ENCODE measurements at regions of chr11 and their contacts with region 1.

Region 1: GRCh38 chr11:60700689-60701480 is 1.5 kb downstream of the MS4A8 start:
- DNase-seq: peak; percentile 21 to 51 (median 33)
- ATAC-seq: peak; percentile 80
- H3K4me3 ChIP-seq: no peak overlapping the region
- H3K27ac ChIP-seq: no peak overlapping the region
- H3K4me1 ChIP-seq: no peaks in the 10 kb centered on the region
- H3K27me3 ChIP-seq: peaks cover 0 to 14% of the 10 kb centered on the region in 2 experiments; a peak in 3 of 5 replicates
- CTCF ChIP-seq: peak; percentile 52 to 61 (median 56)
- EP300 ChIP-seq: no peak
- POLR2A ChIP-seq: no peak
- RAD21 ChIP-seq: peak in 1 of 2 experiments; percentile 39; a peak in 1 of 4 replicates

Region 2: GRCh38 chr11:60672255-60672654 is 28.6 kb before region 1 on chr11:
- CTCF ChIA-PET with region 1: no interaction called
- POLR2A ChIA-PET with region 1: no interaction called
- in situ Hi-C with region 1: no loop called
- intact Hi-C with region 1: no loop called
- DNase-seq: no peak
- ATAC-seq: no peak
- H3K4me3 ChIP-seq: no peak overlapping the region
- H3K27ac ChIP-seq: no peak overlapping the region
- H3K4me1 ChIP-seq: no peaks in the 10 kb centered on the region
- H3K27me3 ChIP-seq: no peaks in the 10 kb centered on the region
- CTCF ChIP-seq: no peak
- EP300 ChIP-seq: no peak
- POLR2A ChIP-seq: no peak
- RAD21 ChIP-seq: no peak

Region 3: DNA sequence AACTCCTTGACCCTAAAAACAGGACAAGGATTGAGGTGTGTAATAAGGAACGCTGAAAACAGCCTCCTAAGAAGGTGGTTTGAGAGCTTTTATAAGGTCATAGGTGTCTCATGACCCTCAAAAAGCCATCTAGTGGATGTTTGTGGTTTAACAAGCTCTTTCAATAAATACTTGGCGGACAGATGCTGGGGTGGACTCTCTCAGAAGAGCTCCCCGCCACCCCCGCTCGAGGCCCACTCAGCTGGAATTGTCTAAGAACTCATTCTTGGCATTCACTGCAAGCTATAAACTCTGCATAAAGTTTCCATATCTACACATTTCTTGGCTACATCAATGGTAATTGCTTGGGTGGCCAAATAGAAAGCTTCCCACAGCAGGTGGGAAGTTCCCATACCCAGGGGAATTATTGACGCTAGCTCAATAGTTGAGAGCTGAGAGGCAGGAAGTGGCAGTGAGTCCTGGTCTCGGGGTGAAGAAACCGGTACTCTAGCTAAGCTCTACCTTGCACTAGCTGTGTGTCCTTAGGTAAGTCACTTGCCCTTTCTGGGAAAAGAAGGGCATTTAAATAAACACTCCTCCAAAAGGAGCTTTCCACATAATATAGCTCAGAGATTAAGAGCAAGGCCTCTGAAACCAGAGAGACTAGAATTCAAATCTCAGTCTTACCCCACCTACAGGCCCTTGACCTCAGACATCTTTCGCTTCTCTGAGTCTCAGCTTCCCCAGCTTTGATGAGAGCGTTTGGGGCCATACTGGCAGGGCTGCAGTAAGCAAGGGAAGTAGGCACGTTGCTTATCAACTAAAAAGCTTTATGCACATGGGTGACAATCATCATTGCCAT is 62.2 kb after region 1 on chr11:
- CTCF ChIA-PET with region 1: no interaction called
- POLR2A ChIA-PET with region 1: interaction called, 3 read pairs
- in situ Hi-C with region 1: no loop called
- intact Hi-C with region 1: loop called (anchors 2 kb)
- DNase-seq: peak in 2 of 4 experiments; percentile 34 to 40
- ATAC-seq: peak; percentile 64
- H3K4me3 ChIP-seq: no peak overlapping the region
- H3K27ac ChIP-seq: no peak overlapping the region
- H3K4me1 ChIP-seq: peaks cover 2 to 6% of the 10 kb centered on the region in 2 experiments; a peak in 1 of 5 replicates
- H3K27me3 ChIP-seq: peaks cover 28 to 52% of the 10 kb centered on the region in 2 experiments
- CTCF ChIP-seq: peak; percentile 28 to 55 (median 52); a peak in 5 of 6 replicates
- EP300 ChIP-seq: no peak
- POLR2A ChIP-seq: no peak
- RAD21 ChIP-seq: peak in 1 of 2 experiments; percentile 29; a peak in 2 of 4 replicates

Measured in K562 (cell line).